ENCODE measurements at regions of chr10 and their contacts with region 1.

Region 1: GRCh38 chr10:87531908-87532622 is 27.4 kb downstream of the MINPP1 start:
- DNase-seq: no peak
- H3K4me3 Mint-ChIP-seq: no peak overlapping the region
- H3K27ac Mint-ChIP-seq: no peak overlapping the region
- H3K4me1 Mint-ChIP-seq: no peaks in the 10 kb centered on the region
- H3K27me3 Mint-ChIP-seq: no peaks in the 10 kb centered on the region
- CTCF ChIP-seq: no peak

Region 2: GRCh38 chr10:87734987-87735827 is 203.1 kb after region 1 on chr10:
- CTCF ChIA-PET with region 1: interaction called, 4 read pairs
- intact Hi-C with region 1: loop called (anchors 1 kb)
- DNase-seq: peak; percentile 20
- H3K4me3 Mint-ChIP-seq: no peak overlapping the region
- H3K27ac Mint-ChIP-seq: no peak overlapping the region
- H3K4me1 Mint-ChIP-seq: peaks cover 6% of the 10 kb centered on the region
- H3K27me3 Mint-ChIP-seq: no peaks in the 10 kb centered on the region
- CTCF ChIP-seq: peak; percentile 55

Region 3: GRCh38 chr10:87771871-87772500 is 239.9 kb after region 1 on chr10:
- CTCF ChIA-PET with region 1: no interaction called
- intact Hi-C with region 1: loop called (anchors 1 kb)
- DNase-seq: no peak
- H3K4me3 Mint-ChIP-seq: no peak overlapping the region
- H3K27ac Mint-ChIP-seq: no peak overlapping the region
- H3K4me1 Mint-ChIP-seq: peaks cover 6% of the 10 kb centered on the region
- H3K27me3 Mint-ChIP-seq: no peaks in the 10 kb centered on the region
- CTCF ChIP-seq: peak; percentile 16

Measured in Calu3 (cell line).